GM13977 (cell line): ENCODE measurements at regions of chr3 and their contacts with region 1.

Region 1: GRCh38 chr3:180601688-180602666 is at the start of gene TTC14:
- DNase-seq: peak; percentile 92
- CTCF ChIP-seq: peak; percentile 48

Region 2: DNA sequence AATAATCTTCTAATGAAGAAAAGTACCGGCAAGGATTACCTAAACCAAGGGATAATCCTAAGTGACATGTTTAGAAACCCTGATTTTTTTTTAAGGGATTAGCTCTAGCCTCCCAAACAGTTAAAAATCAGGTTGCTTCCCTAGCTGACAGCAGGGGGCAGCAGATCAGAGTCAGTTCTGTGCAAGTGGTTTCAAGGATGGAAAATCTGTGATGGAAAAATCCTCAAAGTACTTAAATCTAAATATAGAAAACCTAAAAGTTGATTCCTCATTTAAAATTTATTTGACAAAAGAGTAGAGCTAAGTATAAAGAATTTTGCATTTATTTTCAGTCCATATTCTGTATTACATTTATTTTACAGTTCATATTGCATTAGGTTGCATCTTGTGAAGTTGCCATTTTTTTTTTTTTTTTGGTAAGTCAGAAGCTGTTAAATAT is 672.9 kb before region 1 on chr3:
- in situ Hi-C with region 1: loop called (anchors 25 kb)
- DNase-seq: peak; percentile 43
- CTCF ChIP-seq: peak; percentile 83

Region 3: GRCh38 chr3:180229113-180229512 is 372.9 kb before region 1 on chr3:
- in situ Hi-C with region 1: no loop called
- DNase-seq: no peak
- CTCF ChIP-seq: no peak

Region 4: GRCh38 chr3:180311242-180311641 is 290.7 kb before region 1 on chr3:
- in situ Hi-C with region 1: no loop called
- DNase-seq: no peak
- CTCF ChIP-seq: no peak